ENCODE measurements at regions of chr1 and their contacts with region 1.

Region 1: DNA sequence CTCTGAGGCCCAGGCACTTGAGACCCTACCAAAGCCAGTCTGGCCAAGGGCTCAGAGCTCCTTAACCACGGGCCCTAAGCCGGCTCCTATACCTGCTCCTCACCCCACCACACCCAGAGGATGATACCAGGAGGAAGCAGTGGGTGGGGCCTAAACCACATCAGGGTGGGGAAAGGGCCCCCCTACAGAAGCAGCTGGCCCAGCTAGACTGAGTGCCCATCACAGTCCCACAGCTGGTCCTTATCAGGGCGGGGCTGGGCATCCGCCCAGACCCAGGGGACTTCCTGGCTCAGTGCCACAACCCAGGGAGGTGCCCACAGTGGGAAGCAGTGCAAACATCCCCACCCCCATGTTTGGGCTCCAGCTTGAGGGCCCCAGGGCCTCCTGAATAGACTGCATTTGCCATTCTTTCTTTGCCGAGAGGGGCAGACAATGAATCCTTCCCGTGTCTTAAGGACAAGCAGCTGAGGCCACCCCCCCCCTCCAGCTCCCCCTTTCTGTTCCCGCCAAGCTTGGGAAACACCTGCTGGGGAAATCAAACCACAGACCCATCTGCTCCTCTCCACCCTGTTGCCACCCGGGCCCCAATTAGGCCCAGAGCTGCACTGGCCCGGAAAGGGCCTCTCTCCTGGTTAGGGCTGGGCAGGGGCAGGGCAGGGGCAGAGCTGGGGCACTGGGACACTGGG is 6.2 kb downstream of the E2F2 start:
- DNase-seq: peak; percentile 89
- H3K4me3 ChIP-seq: peak overlapping the region; percentile 84
- H3K27ac ChIP-seq: peak overlapping the region; percentile 98
- H3K4me1 ChIP-seq: peaks cover 61% of the 10 kb centered on the region
- CTCF ChIP-seq: no peak

Region 2: DNA sequence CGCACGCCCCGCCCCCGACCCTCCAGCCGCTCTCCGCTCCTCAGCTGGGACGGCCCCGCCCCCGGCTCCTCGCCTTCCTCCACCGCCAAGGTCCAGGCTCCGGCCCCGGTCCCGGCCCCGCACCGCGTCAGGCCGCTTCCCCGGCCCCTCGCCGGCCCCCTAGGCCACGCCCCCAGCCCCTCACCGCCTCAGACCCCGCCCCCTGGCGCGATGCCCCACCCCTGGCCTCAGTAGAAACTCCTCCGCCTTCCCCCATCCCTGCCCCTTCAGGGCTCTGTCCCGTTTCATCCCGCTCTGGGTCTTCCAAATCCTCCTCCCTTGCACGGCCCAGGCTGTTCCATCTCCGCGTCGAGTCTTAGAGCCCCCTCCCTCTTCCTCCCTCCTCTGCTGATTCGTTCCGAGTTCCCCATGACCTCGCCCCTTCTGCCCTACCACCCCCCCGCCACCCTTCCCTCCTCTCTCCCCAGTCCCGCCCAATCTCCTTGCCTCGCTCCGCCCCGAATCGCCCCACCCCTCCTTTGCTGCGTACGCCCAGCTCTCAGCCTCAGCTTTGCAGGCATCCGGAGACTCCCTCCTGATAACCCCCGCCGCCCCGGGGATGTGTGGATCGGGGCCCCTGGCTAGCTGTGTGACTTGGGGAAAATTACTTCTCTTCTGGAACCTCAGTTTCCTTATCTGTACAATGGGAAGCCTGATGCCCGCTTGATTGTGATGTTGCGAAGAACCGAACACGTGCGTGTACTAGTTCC is 40.4 kb before region 1 on chr1:
- CTCF ChIA-PET with region 1: interaction called, 7 read pairs
- POLR2A ChIA-PET with region 1: no interaction called
- intact Hi-C with region 1: loop called (anchors 2 kb)
- DNase-seq: peak; percentile 92
- H3K4me3 ChIP-seq: peak overlapping the region; percentile 75
- H3K27ac ChIP-seq: peak overlapping the region; percentile 41
- H3K4me1 ChIP-seq: peaks cover 49% of the 10 kb centered on the region
- CTCF ChIP-seq: no peak

Region 3: DNA sequence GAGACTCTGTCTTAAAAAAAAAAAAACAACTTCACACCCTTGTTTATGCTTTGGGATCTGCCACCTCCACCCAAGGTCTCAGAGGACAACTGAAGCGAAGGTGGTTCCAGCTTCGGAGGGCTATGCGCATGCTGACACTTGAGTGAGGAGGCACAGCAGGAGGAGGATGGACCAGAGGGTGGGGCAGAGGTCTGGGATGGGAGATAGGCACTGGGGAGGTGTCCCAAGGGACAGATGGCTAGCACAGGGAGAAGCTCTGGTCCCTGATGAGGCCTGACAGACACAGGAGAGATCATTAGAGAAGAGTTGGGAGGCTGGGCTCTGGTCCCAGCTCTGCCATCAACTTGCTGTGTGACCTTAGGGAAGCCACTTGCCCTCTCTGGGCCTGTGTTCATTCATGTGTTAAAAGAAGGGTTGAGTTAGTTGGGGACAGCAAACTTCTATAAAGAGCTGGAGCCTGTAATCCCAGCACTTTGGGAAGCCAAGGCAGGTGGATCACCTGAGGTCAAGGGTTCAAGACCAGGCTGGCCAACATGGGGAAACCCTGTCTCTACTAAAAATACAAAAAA is 10.7 kb before region 1 on chr1:
- CTCF ChIA-PET with region 1: interaction called, 7 read pairs
- POLR2A ChIA-PET with region 1: interaction called, 18 read pairs
- intact Hi-C with region 1: no loop called
- DNase-seq: no peak
- H3K4me3 ChIP-seq: no peak overlapping the region
- H3K27ac ChIP-seq: no peak overlapping the region
- H3K4me1 ChIP-seq: no peaks in the 10 kb centered on the region
- CTCF ChIP-seq: no peak